IMR-90 (cell line): ENCODE measurements at regions of chr11 and their contacts with region 1.

Region 1: GRCh38 chr11:78416305-78417178 is 1.1 kb downstream of the GAB2 start:
- DNase-seq: peak; percentile 87
- ATAC-seq: peak; percentile 64
- H3K4me3 ChIP-seq: peak overlapping the region; percentile 86
- H3K27ac ChIP-seq: peak overlapping the region; percentile 84
- H3K4me1 ChIP-seq: peaks cover 19% of the 10 kb centered on the region
- H3K27me3 ChIP-seq: no peaks in the 10 kb centered on the region
- CTCF ChIP-seq: peak; percentile 64
- POLR2A ChIP-seq: peak; percentile 65; the same call in 1 of the 2 replicates
- RAD21 ChIP-seq: peak; percentile 57

Region 2: DNA sequence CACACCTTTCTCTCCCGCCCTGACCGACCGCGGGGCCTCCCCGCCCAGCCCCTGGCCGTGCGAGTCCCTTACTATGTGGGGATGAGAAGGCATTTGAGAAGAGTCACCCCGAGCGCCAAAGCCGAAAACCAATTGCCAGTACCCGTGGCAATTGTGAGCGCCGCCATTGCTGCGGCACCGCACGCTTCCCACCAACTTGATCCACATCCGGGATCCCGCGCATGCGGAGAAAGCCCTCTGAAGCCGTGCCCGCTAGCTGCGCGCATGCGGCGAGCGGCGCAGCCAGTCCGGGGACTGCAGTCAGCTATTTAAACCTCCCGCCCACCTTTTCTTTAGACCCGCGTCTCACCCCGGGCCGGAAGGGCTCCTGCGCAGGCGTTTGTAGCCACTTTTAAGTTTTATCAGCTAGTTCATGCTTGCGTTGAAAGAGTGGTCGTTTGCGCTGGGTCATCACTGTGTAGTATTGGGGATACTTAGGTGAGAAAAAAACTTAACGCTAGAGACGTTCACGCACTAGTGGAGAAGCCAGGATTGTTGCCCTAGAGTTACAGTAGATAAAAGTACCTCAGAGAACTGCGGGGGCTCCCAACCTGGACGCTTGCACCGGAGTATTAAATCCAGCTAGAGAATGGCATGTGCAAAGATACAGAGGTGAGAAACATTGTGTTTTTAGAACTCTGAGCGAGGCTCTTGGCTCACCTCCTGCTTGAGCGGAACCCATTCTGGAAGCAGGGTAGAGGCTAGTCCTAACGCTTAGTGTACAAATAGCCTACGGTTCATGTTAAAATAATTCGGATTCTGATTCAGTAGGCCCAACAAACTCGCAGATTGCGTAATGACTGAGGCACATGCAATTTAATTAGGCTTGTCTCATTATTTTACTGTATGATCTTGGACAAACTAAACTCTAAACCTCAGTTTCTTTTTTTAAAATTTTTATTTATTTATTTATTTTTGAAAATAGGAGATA is 276.8 kb before region 1 on chr11 and contains the start of gene ALG8:
- CTCF ChIA-PET with region 1: no interaction called
- POLR2A ChIA-PET with region 1: no interaction called
- dilution Hi-C with region 1: no loop called
- in situ Hi-C with region 1: loop called (anchors 10 kb)
- intact Hi-C with region 1: no loop called
- DNase-seq: peak; percentile 94
- ATAC-seq: peak; percentile 98
- H3K4me3 ChIP-seq: peak within 1 kb of the TSS; percentile 69
- H3K27ac ChIP-seq: peak within 1 kb of the TSS; percentile 70
- H3K4me1 ChIP-seq: peaks cover 2% of the 10 kb centered on the region; the same call in 1 of the 2 replicates
- H3K27me3 ChIP-seq: no peaks in the 10 kb centered on the region
- CTCF ChIP-seq: no peak
- POLR2A ChIP-seq: peak; percentile 84
- RAD21 ChIP-seq: no peak
- total RNA-seq, gene ALG8: 27.8 and 53.0 TPM in 2 replicates

Region 3: GRCh38 chr11:78149646-78150045 is 266.9 kb before region 1 on chr11:
- CTCF ChIA-PET with region 1: interaction called, 6 read pairs
- POLR2A ChIA-PET with region 1: no interaction called
- dilution Hi-C with region 1: no loop called
- in situ Hi-C with region 1: no loop called
- intact Hi-C with region 1: loop called (anchors 2 kb)
- DNase-seq: peak; percentile 87
- ATAC-seq: peak; percentile 98
- H3K4me3 ChIP-seq: no peak overlapping the region
- H3K27ac ChIP-seq: no peak overlapping the region
- H3K4me1 ChIP-seq: no peaks in the 10 kb centered on the region
- H3K27me3 ChIP-seq: no peaks in the 10 kb centered on the region
- CTCF ChIP-seq: peak; percentile 64
- POLR2A ChIP-seq: no peak
- RAD21 ChIP-seq: peak; percentile 71

Region 4: GRCh38 chr11:78228467-78228866 is 188.1 kb before region 1 on chr11:
- CTCF ChIA-PET with region 1: interaction called, 4 read pairs
- POLR2A ChIA-PET with region 1: no interaction called
- dilution Hi-C with region 1: no loop called
- in situ Hi-C with region 1: no loop called
- intact Hi-C with region 1: loop called (anchors 2 kb)
- DNase-seq: peak; percentile 55
- ATAC-seq: peak; percentile 39; the same call in 1 of the 2 replicates
- H3K4me3 ChIP-seq: no peak overlapping the region
- H3K27ac ChIP-seq: no peak overlapping the region
- H3K4me1 ChIP-seq: peaks cover 14% of the 10 kb centered on the region
- H3K27me3 ChIP-seq: no peaks in the 10 kb centered on the region
- CTCF ChIP-seq: peak; percentile 51
- POLR2A ChIP-seq: no peak
- RAD21 ChIP-seq: peak; percentile 69

Region 5: GRCh38 chr11:78310500-78310909 is 106.0 kb before region 1 on chr11:
- CTCF ChIA-PET with region 1: no interaction called
- POLR2A ChIA-PET with region 1: no interaction called
- dilution Hi-C with region 1: no loop called
- in situ Hi-C with region 1: no loop called
- intact Hi-C with region 1: no loop called
- DNase-seq: peak; percentile 35
- ATAC-seq: no peak
- H3K4me3 ChIP-seq: no peak overlapping the region
- H3K27ac ChIP-seq: no peak overlapping the region
- H3K4me1 ChIP-seq: peaks cover 8% of the 10 kb centered on the region
- H3K27me3 ChIP-seq: no peaks in the 10 kb centered on the region
- CTCF ChIP-seq: no peak
- POLR2A ChIP-seq: no peak
- RAD21 ChIP-seq: no peak

Region 6: DNA sequence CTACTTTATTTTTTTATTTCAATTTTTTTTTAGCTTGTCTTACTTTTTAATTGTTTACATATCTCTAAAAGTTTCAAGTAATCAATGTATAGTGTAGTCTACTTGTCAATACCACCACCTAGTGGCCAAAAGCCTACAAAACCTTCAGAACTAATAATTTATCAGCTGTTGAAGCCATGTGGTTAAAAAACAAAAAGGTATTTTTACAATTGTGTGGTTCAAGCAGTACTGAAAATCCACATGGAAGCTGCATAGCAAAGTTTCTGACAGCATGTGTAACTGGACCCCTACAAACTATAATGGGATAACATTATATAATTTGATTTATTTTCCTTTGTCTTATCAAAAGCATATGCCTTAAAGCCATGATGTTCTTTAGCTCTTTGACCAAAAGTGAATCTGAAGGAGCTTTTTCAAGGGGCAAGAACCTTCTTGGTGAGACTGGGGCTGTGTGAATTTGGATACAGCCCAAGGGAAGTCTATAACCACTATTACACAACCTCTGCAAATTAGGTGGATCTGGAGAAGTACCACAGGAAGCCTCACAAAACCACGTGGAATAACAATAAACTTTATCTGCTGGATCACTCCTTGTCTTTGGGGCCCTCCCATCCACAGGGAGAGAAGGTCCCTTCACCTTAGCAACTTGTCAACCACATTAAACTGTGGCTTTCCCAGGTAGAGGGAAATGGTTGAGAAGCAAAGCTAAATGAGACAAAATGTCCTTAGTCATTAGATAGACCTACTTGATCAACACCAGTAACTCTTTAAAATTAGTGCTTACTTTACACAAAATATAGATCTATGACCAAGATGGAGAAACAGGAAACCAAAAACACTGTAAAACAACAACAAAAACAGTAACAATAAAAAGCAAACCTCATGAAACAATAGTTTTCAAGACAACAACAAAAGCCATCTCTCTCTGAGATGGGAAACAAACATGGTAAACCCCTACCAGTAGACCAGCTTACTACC is 148.2 kb after region 1 on chr11:
- CTCF ChIA-PET with region 1: interaction called, 19 read pairs
- POLR2A ChIA-PET with region 1: no interaction called
- dilution Hi-C with region 1: no loop called
- in situ Hi-C with region 1: loop called (anchors 5 kb)
- intact Hi-C with region 1: loop called (anchors 1 kb)
- DNase-seq: peak; percentile 76
- ATAC-seq: peak; percentile 58
- H3K4me3 ChIP-seq: no peak overlapping the region
- H3K27ac ChIP-seq: peak overlapping the region; percentile 3; the same call in 1 of the 2 replicates
- H3K4me1 ChIP-seq: peaks cover 13% of the 10 kb centered on the region
- H3K27me3 ChIP-seq: no peaks in the 10 kb centered on the region
- CTCF ChIP-seq: peak; percentile 80
- POLR2A ChIP-seq: no peak
- RAD21 ChIP-seq: peak; percentile 80